GM23248 (cell line): ENCODE measurements at regions of chr6 and their contacts with region 1.

Region 1: DNA sequence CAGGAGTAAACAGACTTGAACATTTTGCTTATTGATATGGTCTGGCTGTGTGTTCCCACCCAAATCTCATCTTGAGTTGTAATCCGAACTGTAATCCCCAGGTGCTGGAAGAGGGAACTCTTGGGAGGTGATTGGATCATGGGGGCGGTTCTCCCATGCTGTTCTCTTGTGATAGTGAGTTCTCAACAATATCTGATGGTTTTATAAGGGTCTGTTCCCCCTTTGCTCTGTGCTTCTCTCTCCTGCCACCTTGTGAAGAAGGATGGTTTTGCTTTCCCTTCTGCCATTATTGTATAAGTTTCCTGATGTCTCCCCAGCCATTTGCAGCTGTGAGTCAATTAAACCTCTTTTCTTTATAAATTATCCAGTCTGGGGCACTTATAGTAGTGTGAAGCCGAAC is 40.0 kb downstream of the MYLIP start:
- DNase-seq: peak; percentile 45
- H3K4me3 ChIP-seq: no peak overlapping the region
- H3K27ac ChIP-seq: no peak overlapping the region
- H3K4me1 ChIP-seq: no peaks in the 10 kb centered on the region
- H3K27me3 ChIP-seq: peaks cover 43% of the 10 kb centered on the region

Region 2: DNA sequence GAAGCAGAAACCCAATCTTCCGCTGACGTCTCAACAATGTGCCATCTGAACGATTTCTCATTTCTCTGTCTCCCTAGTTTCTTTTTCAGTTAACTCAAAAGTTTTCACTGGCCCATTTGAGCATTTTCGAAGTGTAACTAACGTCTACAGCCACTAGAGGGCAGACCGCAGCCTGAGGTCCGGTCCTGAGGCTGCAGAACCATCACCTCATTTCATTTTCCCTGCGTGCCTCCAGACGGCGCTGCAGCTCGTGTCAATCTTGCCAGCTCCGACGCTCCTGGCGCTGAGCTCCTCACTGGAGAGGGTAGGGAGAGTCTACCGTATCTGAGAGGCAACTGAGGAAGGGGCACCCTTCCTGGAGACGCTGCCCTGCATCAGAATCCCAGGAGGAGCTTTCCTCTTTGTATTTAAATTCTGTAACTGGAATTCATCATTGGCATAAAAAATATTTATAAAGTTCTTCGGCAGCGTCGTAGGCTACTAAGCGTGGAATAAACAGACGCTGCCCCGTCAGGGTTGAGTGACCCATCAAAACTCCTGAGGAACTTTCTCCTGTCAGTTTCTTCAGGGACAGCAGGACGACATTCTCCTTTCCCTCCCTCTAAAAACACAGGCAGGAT is 477.5 kb before region 1 on chr6:
- in situ Hi-C with region 1: loop called (anchors 10 kb)
- DNase-seq: peak; percentile 94
- H3K4me3 ChIP-seq: peak overlapping the region; percentile 65
- H3K27ac ChIP-seq: no peak overlapping the region
- H3K4me1 ChIP-seq: no peaks in the 10 kb centered on the region
- H3K27me3 ChIP-seq: peaks cover 2% of the 10 kb centered on the region

Region 3: GRCh38 chr6:16481697-16482399 is 313.0 kb after region 1 on chr6:
- in situ Hi-C with region 1: no loop called
- DNase-seq: no peak
- H3K4me3 ChIP-seq: no peak overlapping the region
- H3K27ac ChIP-seq: no peak overlapping the region
- H3K4me1 ChIP-seq: no peaks in the 10 kb centered on the region
- H3K27me3 ChIP-seq: no peaks in the 10 kb centered on the region